Calu3 (cell line): ENCODE measurements at regions of chrX and their contacts with region 1.

Region 1: DNA sequence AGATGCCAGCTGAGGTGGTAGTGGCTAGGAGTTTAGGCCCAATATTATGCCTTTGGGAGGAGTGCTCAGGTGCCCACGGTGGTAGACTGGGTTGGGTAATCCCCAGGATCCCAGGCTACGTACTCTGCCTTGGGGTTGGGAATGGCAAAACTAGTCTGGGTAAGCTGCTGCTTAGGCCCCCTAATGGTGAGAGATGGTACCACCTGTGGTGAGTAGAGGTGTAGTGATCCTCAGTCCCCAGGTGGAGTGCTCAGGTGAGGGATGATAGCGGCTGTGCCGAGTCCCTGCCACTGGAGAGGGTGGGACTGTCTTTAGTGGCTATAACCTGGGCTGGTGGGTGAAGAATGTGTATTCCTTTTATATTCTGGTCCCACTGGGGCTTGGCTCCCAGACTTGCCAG is 75.2 kb downstream of the IL1RAPL2 start:
- DNase-seq: peak; percentile 8
- H3K4me3 Mint-ChIP-seq: no peak overlapping the region
- H3K27ac Mint-ChIP-seq: no peak overlapping the region
- H3K4me1 Mint-ChIP-seq: peaks cover 11% of the 10 kb centered on the region
- H3K27me3 Mint-ChIP-seq: no peaks in the 10 kb centered on the region
- CTCF ChIP-seq: peak; percentile 14

Region 2: GRCh38 chrX:104712515-104712914 is 71.3 kb after region 1 on chrX:
- CTCF ChIA-PET with region 1: no interaction called
- intact Hi-C with region 1: loop called (anchors 2 kb)
- DNase-seq: no peak
- H3K4me3 Mint-ChIP-seq: no peak overlapping the region
- H3K27ac Mint-ChIP-seq: no peak overlapping the region
- H3K4me1 Mint-ChIP-seq: no peaks in the 10 kb centered on the region
- H3K27me3 Mint-ChIP-seq: peaks cover 22% of the 10 kb centered on the region
- CTCF ChIP-seq: no peak